ENCODE measurements at regions of chr12 and their contacts with region 1.

Region 1: GRCh38 chr12:28190321-28191050 is at the start of gene CCDC91:
- DNase-seq: peak; percentile 82 to 97 (median 88)
- ATAC-seq: peak; percentile 79
- H3K4me3 ChIP-seq: peak within 1 kb of the TSS; percentile 76
- H3K4me3 Mint-ChIP-seq: peak within 1 kb of the TSS; percentile 97
- H3K27ac ChIP-seq: peak within 1 kb of the TSS; percentile 98 to 99
- H3K27ac Mint-ChIP-seq: peak within 1 kb of the TSS; percentile 99
- H3K4me1 ChIP-seq: peaks cover 21% of the 10 kb centered on the region
- H3K4me1 Mint-ChIP-seq: peaks cover 65% of the 10 kb centered on the region
- H3K27me3 ChIP-seq: no peaks in the 10 kb centered on the region
- H3K27me3 Mint-ChIP-seq: no peaks in the 10 kb centered on the region
- CTCF ChIP-seq: no peak
- total RNA-seq, gene CCDC91: 52.9 to 55.3 TPM

Region 2: DNA sequence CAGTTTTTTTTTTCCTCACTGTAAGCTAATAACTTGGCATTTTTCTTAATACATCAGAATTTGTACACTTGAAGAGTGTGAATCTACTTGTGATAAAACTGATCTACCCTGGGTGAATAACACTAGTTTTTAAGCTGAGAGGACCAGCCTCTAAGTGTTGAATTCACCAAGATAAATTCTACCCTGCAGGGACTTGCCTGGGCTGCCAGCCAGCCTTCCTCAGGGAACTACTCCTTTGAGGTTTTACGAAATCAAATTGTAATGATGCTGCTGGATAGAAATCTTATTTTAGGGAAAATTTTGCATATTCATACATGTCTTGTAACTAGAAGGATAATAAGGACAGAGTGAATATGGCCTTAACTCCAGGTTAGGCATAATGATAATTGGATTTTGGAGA is 1166.2 kb before region 1 on chr12:
- CTCF ChIA-PET with region 1: no interaction called
- POLR2A ChIA-PET with region 1: no interaction called
- intact Hi-C with region 1: loop called in 1 of 2 experiments (anchors 10 kb)
- DNase-seq: no peak
- ATAC-seq: no peak
- H3K4me3 ChIP-seq: no peak overlapping the region
- H3K4me3 Mint-ChIP-seq: peak overlapping the region; percentile 91
- H3K27ac ChIP-seq: no peak overlapping the region
- H3K27ac Mint-ChIP-seq: peak overlapping the region; percentile 92
- H3K4me1 ChIP-seq: peaks cover 19% of the 10 kb centered on the region
- H3K4me1 Mint-ChIP-seq: peaks cover 43% of the 10 kb centered on the region
- H3K27me3 ChIP-seq: no peaks in the 10 kb centered on the region
- H3K27me3 Mint-ChIP-seq: no peaks in the 10 kb centered on the region
- CTCF ChIP-seq: no peak

Region 3: DNA sequence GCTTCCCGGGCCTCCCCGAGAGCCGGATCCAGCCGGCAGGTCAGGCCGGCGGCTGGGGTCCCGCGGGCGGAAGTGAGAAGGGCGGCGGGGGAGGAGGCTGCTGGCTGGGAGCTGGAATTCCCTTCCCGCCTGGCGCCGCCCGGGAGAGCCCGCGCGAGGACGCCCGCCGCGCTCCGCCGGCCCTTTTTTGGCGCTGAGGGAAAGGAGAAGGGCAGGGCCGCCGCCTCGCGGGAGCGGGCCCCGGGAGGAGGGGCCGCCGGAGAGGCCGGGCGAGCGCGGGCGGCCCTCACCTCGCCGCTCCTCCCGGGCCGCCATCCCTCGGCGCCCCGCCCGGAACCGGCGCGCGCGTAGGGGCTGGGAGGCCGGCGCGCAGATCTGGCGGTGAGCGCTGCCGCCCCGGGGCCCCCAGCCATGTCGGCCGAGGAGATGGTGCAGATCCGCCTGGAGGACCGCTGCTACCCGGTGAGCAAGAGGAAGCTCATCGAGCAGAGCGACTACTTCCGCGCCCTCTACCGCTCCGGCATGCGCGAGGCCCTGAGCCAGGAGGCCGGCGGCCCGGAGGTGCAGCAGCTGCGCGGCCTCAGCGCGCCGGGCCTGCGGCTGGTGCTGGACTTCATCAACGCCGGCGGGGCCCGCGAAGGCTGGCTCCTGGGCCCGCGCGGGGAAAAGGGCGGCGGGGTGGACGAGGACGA is 410.4 kb before region 1 on chr12 and contains the starts of genes KLHL42 and MANSC4:
- CTCF ChIA-PET with region 1: no interaction called
- POLR2A ChIA-PET with region 1: interaction called, 16 read pairs
- intact Hi-C with region 1: no loop called
- DNase-seq: peak; percentile 47 to 84 (median 65)
- ATAC-seq: peak; percentile 81
- H3K4me3 ChIP-seq: peak within 1 kb of the TSS; percentile 80
- H3K4me3 Mint-ChIP-seq: peak within 1 kb of the TSS; percentile 90
- H3K27ac ChIP-seq: peak within 1 kb of the TSS in 1 of 2 donors; percentile 22
- H3K27ac Mint-ChIP-seq: peak within 1 kb of the TSS; percentile 80
- H3K4me1 ChIP-seq: peaks cover 27% of the 10 kb centered on the region
- H3K4me1 Mint-ChIP-seq: peaks cover 40% of the 10 kb centered on the region
- H3K27me3 ChIP-seq: no peaks in the 10 kb centered on the region
- H3K27me3 Mint-ChIP-seq: no peaks in the 10 kb centered on the region
- CTCF ChIP-seq: no peak
- total RNA-seq, gene KLHL42: 12.8 to 13.2 TPM
- total RNA-seq, gene MANSC4: not detected

Region 4: GRCh38 chr12:28217805-28218204 is 27.3 kb after region 1 on chr12:
- CTCF ChIA-PET with region 1: interaction called, 6 read pairs
- POLR2A ChIA-PET with region 1: interaction called, 31 read pairs
- intact Hi-C with region 1: no loop called
- DNase-seq: peak in 1 of 14 experiments; percentile 38
- ATAC-seq: peak; percentile 56
- H3K4me3 ChIP-seq: no peak overlapping the region
- H3K4me3 Mint-ChIP-seq: peak overlapping the region; percentile 2
- H3K27ac ChIP-seq: no peak overlapping the region
- H3K27ac Mint-ChIP-seq: peak overlapping the region; percentile 41
- H3K4me1 ChIP-seq: peaks cover 7% of the 10 kb centered on the region
- H3K4me1 Mint-ChIP-seq: peaks cover 78% of the 10 kb centered on the region
- H3K27me3 ChIP-seq: no peaks in the 10 kb centered on the region
- H3K27me3 Mint-ChIP-seq: no peaks in the 10 kb centered on the region
- CTCF ChIP-seq: no peak

Region 5: DNA sequence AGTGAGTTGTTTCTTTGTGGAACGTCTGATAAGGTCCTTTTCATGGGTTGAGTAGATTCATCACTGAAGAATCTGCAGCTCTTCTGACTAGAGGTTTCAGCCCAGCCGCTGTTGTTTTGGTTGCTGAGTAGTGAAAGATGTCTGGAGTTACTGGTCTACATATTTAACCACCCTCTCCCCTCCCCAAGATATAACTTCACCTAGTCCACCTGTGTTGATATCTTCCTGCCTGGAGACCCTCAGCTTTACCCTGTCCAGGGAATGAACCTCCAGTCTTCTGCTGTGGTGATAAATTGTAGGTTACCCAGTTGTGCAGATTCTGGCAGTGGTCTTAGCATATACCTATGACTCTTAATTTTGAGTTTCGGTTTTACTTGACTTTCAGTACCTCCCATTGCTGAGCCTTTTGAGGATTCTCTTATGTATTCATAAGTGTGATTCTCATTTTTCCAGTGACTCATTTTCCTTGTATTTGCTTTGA is 62.7 kb after region 1 on chr12:
- CTCF ChIA-PET with region 1: no interaction called
- POLR2A ChIA-PET with region 1: interaction called, 16 read pairs
- intact Hi-C with region 1: loop called in 1 of 2 experiments (anchors 5 kb)
- DNase-seq: peak in 5 of 14 experiments; percentile 1 to 73 (median 55)
- ATAC-seq: peak; percentile 93
- H3K4me3 ChIP-seq: peak overlapping the region; percentile 44
- H3K4me3 Mint-ChIP-seq: peak overlapping the region; percentile 89
- H3K27ac ChIP-seq: peak overlapping the region in 1 of 2 donors; percentile 40
- H3K27ac Mint-ChIP-seq: peak overlapping the region; percentile 78
- H3K4me1 ChIP-seq: peaks cover 3% of the 10 kb centered on the region
- H3K4me1 Mint-ChIP-seq: peaks cover 59% of the 10 kb centered on the region
- H3K27me3 ChIP-seq: no peaks in the 10 kb centered on the region
- H3K27me3 Mint-ChIP-seq: no peaks in the 10 kb centered on the region
- CTCF ChIP-seq: no peak

Region 6: DNA sequence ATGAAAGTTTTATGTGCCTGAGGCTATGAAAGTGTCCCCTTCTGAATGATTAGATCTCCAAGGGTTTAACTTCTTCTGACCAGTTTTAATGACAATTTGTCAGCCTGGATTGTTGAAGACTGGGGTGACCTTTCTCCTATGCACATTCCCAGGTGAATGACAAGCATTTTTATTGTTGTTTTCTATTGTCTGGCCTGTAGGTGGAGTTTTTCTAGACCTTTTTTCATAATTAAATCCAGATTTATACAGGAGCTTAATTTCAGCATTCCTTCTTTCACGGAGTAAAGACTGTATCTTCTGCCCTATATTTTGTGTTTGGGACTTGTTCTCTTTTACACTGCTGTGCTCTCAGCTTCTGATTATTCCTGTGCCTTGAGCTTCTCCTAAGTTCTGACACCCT is 833.6 kb after region 1 on chr12:
- CTCF ChIA-PET with region 1: no interaction called
- POLR2A ChIA-PET with region 1: no interaction called
- intact Hi-C with region 1: no loop called
- DNase-seq: no peak
- ATAC-seq: no peak
- H3K4me3 ChIP-seq: no peak overlapping the region
- H3K4me3 Mint-ChIP-seq: no peak overlapping the region
- H3K27ac ChIP-seq: no peak overlapping the region
- H3K27ac Mint-ChIP-seq: no peak overlapping the region
- H3K4me1 ChIP-seq: no peaks in the 10 kb centered on the region
- H3K4me1 Mint-ChIP-seq: peaks cover 11% of the 10 kb centered on the region
- H3K27me3 ChIP-seq: no peaks in the 10 kb centered on the region
- H3K27me3 Mint-ChIP-seq: peaks cover 10% of the 10 kb centered on the region
- CTCF ChIP-seq: no peak

Measured in CD4-positive, alpha-beta T cell (primary cell).